Dorsolateral prefrontal cortex (tissue), 120 donors: ENCODE measurements at regions of chr14 and their contacts with region 1.

Region 1: GRCh38 chr14:41137741-41138140 is 468.9 kb upstream of the LRFN5 start:
- DNase-seq: no peak
- H3K4me3 ChIP-seq: no peak overlapping the region
- H3K27ac ChIP-seq: no peak overlapping the region
- H3K27me3 ChIP-seq: no peaks in the 10 kb centered on the region
- CTCF ChIP-seq: no peak

Region 2: DNA sequence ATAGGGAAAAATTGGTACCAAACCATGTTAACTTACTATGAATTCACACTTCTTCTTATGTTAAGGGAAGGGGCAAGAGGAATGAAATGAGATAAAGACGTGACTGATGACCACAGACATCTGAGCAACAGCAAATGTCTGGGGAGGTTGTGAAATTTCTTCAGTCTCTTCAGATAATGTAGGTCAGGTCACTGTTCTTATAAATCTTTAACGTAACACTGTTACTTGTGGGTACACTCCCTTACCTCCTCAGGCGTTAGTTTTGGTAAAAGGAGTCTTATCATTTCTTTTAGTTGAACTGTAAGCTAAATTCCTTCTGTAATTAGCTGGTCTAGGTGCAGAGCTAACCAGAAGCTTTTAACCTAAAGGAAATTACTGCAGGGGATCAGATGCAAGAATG is 64.0 kb after region 1 on chr14:
- intact Hi-C with region 1: loop called in 1 of 2 experiments (anchors 5 kb)
- DNase-seq: no peak
- H3K4me3 ChIP-seq: no peak overlapping the region
- H3K27ac ChIP-seq: no peak overlapping the region
- H3K27me3 ChIP-seq: no peaks in the 10 kb centered on the region
- CTCF ChIP-seq: no peak

Region 3: DNA sequence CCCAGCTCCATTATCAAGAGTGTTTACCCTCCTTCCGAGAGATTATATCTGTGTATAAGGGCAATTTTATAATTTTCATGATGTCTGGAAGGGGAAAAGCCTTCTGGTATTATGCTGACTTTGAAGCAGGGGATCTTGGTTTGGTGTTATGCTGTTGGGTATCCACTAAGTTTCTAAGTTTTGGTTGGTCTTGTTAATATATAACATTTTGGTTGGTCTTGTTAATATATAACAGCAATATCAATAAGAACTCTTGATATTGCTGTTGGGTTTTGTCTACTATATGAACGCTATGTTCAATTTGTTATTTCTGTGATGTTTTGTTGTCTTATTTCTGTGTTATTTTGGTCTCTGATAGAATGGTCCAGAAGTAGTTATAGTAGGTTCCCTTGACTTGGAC is 119.7 kb after region 1 on chr14:
- intact Hi-C with region 1: no loop called
- DNase-seq: no peak
- H3K4me3 ChIP-seq: no peak overlapping the region
- H3K27ac ChIP-seq: no peak overlapping the region
- H3K27me3 ChIP-seq: no peaks in the 10 kb centered on the region
- CTCF ChIP-seq: no peak